ENCODE measurements at regions of chr3 and their contacts with region 1.

Region 1: GRCh38 chr3:38297947-38298711 is 16.0 kb downstream of the SLC22A14 start:
- DNase-seq: no peak
- H3K4me3 ChIP-seq: no peak overlapping the region
- H3K27ac ChIP-seq: no peak overlapping the region
- H3K4me1 ChIP-seq: no peaks in the 10 kb centered on the region
- H3K27me3 ChIP-seq: no peaks in the 10 kb centered on the region
- CTCF ChIP-seq: peak in 1 of 3 experiments; percentile 29; a peak in 1 of 4 replicates
- EP300 ChIP-seq: no peak
- POLR2A ChIP-seq: no peak
- RAD21 ChIP-seq: no peak

Region 2: GRCh38 chr3:38131621-38132369 is 166.3 kb before region 1 on chr3:
- CTCF ChIA-PET with region 1: interaction called, 17 read pairs
- POLR2A ChIA-PET with region 1: no interaction called
- DNase-seq: peak in 1 of 2 experiments; percentile 88
- H3K4me3 ChIP-seq: no peak overlapping the region
- H3K27ac ChIP-seq: no peak overlapping the region
- H3K4me1 ChIP-seq: peaks cover 0 to 3% (median under 1%) of the 10 kb centered on the region in 4 experiments; a peak in 1 of 7 replicates
- H3K27me3 ChIP-seq: no peaks in the 10 kb centered on the region
- CTCF ChIP-seq: peak in 2 of 3 experiments; percentile 80 to 82; a peak in 3 of 4 replicates
- EP300 ChIP-seq: no peak
- POLR2A ChIP-seq: no peak
- RAD21 ChIP-seq: peak; percentile 77 to 85

Region 3: GRCh38 chr3:38314112-38314763 is 16.1 kb after region 1 on chr3:
- CTCF ChIA-PET with region 1: interaction called, 41 read pairs
- POLR2A ChIA-PET with region 1: no interaction called
- DNase-seq: peak in 1 of 2 experiments; percentile 49
- H3K4me3 ChIP-seq: no peak overlapping the region
- H3K27ac ChIP-seq: no peak overlapping the region
- H3K4me1 ChIP-seq: peaks cover 0 to 4% (median 0%) of the 10 kb centered on the region in 4 experiments; a peak in 2 of 7 replicates
- H3K27me3 ChIP-seq: no peaks in the 10 kb centered on the region
- CTCF ChIP-seq: no peak
- EP300 ChIP-seq: no peak
- POLR2A ChIP-seq: no peak
- RAD21 ChIP-seq: no peak

Region 4: DNA sequence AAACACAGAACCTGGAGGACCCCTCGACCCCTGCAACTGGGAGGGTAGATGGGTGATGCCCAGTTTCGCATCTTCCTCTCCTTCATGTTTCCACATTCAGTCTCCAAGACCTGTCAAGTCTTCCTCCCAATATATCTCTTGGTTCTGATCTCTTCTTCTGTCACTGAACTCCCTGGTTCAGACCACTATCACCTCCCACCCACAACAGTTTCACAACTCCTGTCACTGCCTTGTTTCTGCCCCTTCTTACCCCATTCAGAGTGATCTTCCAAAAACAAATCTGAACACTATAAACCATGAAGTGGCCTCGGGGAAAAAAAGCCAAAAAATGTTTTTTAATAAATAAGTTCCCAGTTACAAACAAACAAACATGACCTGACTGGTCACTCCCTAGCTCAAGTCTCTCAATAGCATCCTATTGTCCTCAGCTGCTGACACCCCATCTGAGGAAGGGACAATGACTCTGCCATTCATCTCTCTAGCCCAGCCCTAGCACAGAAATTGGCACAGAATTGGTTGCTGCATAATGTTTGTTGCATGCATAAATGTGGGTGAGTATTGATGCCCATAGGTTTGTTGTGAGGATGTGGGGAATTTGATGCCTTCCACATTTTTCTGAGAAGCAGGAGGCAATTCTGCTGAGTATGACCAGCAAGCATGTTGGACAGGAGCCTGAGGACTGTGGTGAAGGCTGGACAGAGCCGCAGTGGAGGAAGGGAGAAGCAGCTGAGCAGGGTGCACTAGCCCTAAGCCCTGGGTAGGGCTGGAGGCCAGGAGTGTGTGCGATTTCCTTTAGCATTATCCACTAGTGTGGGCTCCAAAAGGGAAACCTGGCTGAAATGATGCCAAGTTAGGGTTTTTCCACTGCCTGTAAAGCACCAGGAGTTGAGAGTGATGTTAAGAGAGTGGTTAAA is 36.3 kb after region 1 on chr3:
- CTCF ChIA-PET with region 1: interaction called, 10 read pairs
- POLR2A ChIA-PET with region 1: no interaction called
- DNase-seq: no peak
- H3K4me3 ChIP-seq: no peak overlapping the region
- H3K27ac ChIP-seq: no peak overlapping the region
- H3K4me1 ChIP-seq: no peaks in the 10 kb centered on the region
- H3K27me3 ChIP-seq: no peaks in the 10 kb centered on the region; a peak in 2 of 7 replicates
- CTCF ChIP-seq: no peak
- EP300 ChIP-seq: no peak
- POLR2A ChIP-seq: no peak
- RAD21 ChIP-seq: no peak